Common myeloid progenitor, CD34-positive (primary cell): ENCODE measurements at regions of chr3 and their contacts with region 1.

Region 1: DNA sequence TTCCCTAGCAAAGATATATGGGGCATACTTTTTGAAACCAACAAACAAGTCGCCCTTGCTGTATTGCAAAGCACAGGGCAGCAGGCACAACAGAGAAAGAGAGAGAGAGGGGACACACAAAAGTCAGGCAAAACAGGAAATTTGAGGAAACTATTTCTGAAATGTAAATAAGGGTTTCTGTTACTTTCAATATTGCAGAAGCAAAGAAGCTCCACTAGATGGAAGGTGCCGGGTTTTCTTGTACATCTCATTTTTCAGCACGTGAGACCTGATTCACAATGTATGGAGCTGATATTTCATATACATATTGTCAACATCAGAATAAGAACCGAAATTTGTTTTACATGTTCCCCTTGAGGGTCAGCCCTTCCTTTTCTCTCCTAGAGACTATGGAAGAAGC is 127.4 kb downstream of the FOXP1 start:
- DNase-seq: peak; percentile 50 to 67 (median 61)
- H3K4me3 ChIP-seq: peak overlapping the region in 6 of 7 experiments; percentile 42 to 71 (median 58)
- H3K27ac ChIP-seq: peak overlapping the region; percentile 34 to 83
- H3K4me1 ChIP-seq: peaks cover 48 to 72% (median 59%) of the 10 kb centered on the region in 4 experiments
- H3K27me3 ChIP-seq: no peaks in the 10 kb centered on the region

Region 2: GRCh38 chr3:71444028-71444860 is 11.9 kb before region 1 on chr3:
- CTCF ChIA-PET with region 1: interaction called, 26 read pairs
- POLR2A ChIA-PET with region 1: interaction called, 4 read pairs
- DNase-seq: peak; percentile 95 to 98 (median 97)
- H3K4me3 ChIP-seq: peak overlapping the region in 5 of 7 experiments; percentile 5 to 52 (median 38)
- H3K27ac ChIP-seq: peak overlapping the region; percentile 74 to 81
- H3K4me1 ChIP-seq: peaks cover 53 to 98% (median 95%) of the 10 kb centered on the region in 4 experiments
- H3K27me3 ChIP-seq: no peaks in the 10 kb centered on the region

Region 3: DNA sequence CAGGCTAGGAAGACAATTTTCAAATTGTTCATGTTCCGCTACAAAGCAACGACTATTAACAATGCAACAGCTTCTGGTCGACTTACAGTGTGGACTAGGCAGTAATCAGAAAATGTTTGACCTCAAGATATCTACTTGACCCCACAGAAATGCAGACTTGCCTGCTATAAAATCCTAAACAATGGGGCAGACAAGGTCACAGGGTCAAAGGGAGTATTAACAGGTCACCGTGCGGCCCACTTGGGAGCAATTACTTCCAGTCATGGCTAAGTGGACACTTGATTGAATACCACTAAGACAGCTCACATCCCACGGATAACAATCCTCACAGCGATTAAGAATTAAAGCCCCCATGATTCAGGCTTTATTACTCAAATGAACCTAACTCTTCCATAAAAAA is 68.5 kb after region 1 on chr3:
- CTCF ChIA-PET with region 1: no interaction called
- POLR2A ChIA-PET with region 1: no interaction called
- DNase-seq: no peak
- H3K4me3 ChIP-seq: no peak overlapping the region
- H3K27ac ChIP-seq: no peak overlapping the region
- H3K4me1 ChIP-seq: peaks cover 4 to 17% (median 8%) of the 10 kb centered on the region in 4 experiments
- H3K27me3 ChIP-seq: no peaks in the 10 kb centered on the region